Gastrocnemius medialis (tissue), 4 donors: ENCODE measurements at regions of chr4 and their contacts with region 1.

Region 1: DNA sequence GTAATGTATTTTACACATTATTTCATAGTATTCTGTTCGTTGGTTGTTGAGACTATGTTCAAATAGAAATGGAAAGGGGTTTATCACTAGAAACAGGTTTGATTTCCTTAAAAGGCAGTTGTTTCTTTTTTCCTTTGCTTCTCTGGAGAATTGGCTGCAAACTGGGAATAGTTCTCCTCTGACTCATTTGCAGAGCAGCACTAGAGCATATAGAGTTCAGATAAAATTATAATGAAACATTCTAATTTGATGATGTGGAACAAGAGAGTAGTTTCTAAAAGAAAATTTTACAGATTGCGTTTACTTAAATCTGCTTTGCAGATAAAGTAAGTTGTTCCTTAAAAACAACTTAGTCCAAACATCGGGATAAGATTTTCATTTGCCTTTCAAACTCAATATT is 29.7 kb downstream of the SYNPO2 start:
- DNase-seq: no peak
- ATAC-seq: peak in 1 of 2 donors; percentile 60
- H3K4me3 ChIP-seq: no peak overlapping the region
- H3K27ac ChIP-seq: peak overlapping the region in 2 of 4 donors; percentile 23 to 50
- H3K4me1 ChIP-seq: peaks cover 33 to 40% of the 10 kb centered on the region in 2 donors
- H3K27me3 ChIP-seq: no peaks in the 10 kb centered on the region
- CTCF ChIP-seq: no peak
- POLR2A ChIP-seq: no peak

Region 2: DNA sequence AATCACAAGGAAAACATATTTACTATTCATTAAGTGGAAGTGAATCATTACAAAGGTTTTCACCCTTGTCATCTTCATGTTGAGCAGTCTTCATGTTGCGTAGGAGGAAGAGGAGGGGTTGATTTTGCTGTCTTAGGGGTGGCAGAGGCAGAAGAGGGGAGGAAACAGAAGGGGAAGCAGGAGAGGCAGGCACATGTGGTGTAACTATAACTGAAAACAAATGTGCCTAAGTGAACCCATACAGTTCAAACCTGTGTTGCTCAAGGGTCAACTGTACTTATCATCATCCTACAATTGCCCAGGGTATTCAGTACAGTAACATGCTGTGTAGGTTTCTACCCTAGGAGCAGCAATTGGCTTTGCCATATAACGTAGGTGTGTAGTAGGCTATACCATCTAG is 17.4 kb after region 1 on chr4:
- in situ Hi-C with region 1: no loop called
- intact Hi-C with region 1: loop called (anchors 2 kb)
- DNase-seq: no peak
- ATAC-seq: no peak
- H3K4me3 ChIP-seq: no peak overlapping the region
- H3K27ac ChIP-seq: peak overlapping the region in 3 of 4 donors; percentile 16 to 59 (median 20)
- H3K4me1 ChIP-seq: peaks cover 9 to 14% of the 10 kb centered on the region in 2 donors
- H3K27me3 ChIP-seq: no peaks in the 10 kb centered on the region
- CTCF ChIP-seq: no peak
- POLR2A ChIP-seq: no peak

Region 3: DNA sequence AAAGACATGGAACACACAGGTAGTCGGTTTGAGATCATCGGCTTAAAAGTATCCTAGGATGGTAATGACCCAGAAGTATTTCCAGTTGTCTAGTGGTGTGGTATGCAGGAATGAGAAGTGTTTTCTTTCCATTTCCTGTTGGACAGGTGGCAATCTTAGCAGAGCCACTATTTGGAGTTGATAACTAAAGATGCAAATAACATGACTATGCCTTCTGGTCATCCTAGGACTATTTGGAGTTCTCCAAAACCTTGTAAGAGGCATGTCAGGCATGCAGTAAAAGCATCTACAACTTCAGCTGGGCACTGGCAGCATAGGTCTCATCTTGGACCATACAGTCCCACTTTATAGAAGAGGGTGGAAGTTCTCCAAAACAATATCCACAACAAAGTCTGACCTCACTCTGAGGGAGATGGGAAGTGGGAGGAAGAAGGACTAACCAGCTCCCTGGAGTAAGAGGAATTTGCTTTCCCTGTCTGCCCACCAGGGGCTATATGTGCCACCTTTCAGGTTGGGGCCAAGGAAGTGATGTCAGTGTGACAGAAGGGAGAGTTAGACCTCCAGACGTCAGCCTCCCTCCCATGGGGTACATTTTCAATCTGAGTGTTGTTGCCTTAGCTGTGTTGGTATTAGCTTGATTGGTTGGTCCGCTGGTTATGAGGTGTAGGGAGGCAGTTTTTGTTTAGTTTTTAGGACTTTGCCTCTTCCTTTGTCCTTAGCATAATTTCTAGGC is 116.1 kb after region 1 on chr4:
- in situ Hi-C with region 1: no loop called
- intact Hi-C with region 1: no loop called
- DNase-seq: no peak
- ATAC-seq: no peak
- H3K4me3 ChIP-seq: peak overlapping the region in 2 of 4 donors; percentile 73 to 74
- H3K27ac ChIP-seq: peak overlapping the region; percentile 94 to 98 (median 96)
- H3K4me1 ChIP-seq: peaks cover 55 to 56% of the 10 kb centered on the region in 2 donors
- H3K27me3 ChIP-seq: no peaks in the 10 kb centered on the region
- CTCF ChIP-seq: no peak
- POLR2A ChIP-seq: peak in 1 of 2 donors; percentile 25

Region 4: DNA sequence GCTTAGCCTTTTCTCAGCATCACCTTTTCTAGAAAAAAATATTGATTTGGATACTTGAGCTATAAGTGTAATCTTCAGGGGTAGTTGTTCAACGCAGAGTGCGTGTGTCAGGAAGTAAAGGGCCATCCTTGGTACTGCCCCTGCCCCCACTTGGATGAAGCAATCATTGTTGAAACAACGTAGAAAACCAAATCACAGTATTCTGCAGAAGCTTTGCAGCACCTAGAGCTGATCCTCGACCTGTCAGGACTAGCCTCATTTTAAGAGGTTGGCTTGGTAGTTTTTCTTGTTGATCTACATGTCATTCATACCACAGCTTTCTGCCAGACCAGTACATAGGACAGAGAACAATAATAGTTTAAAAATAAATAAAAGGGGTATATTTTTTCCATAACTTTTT is 151.9 kb after region 1 on chr4:
- in situ Hi-C with region 1: no loop called
- intact Hi-C with region 1: no loop called
- DNase-seq: no peak
- ATAC-seq: no peak
- H3K4me3 ChIP-seq: no peak overlapping the region
- H3K27ac ChIP-seq: no peak overlapping the region
- H3K4me1 ChIP-seq: no peaks in the 10 kb centered on the region
- H3K27me3 ChIP-seq: no peaks in the 10 kb centered on the region
- CTCF ChIP-seq: no peak
- POLR2A ChIP-seq: no peak

Region 5: DNA sequence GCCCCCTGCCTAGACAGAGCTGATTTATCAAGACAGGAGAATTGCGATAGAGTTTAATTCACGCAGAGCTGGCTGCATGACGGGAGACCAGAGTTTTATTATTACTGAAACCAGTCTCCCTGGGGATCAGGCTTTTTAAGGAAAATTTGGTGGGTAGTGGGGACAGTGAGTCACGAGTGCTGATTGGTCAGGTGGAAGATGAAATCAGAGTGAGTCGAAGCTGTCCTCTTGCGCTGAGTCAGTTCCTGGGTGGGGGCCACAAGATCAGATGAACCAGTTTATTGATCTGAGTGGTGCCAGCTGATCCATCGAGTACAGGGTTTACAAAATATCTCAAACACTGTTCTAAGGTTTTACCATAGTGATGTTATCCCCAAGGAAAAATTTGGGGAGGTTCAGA is 253.8 kb after region 1 on chr4:
- in situ Hi-C with region 1: no loop called
- intact Hi-C with region 1: no loop called
- DNase-seq: no peak
- ATAC-seq: no peak
- H3K4me3 ChIP-seq: no peak overlapping the region
- H3K27ac ChIP-seq: no peak overlapping the region
- H3K4me1 ChIP-seq: no peaks in the 10 kb centered on the region
- H3K27me3 ChIP-seq: no peaks in the 10 kb centered on the region
- CTCF ChIP-seq: no peak
- POLR2A ChIP-seq: no peak